Cardiac septum (tissue), 1 donor: ENCODE measurements at regions of chr1 and their contacts with region 1.

Region 1: GRCh38 chr1:207321079-207321789 is at the start of gene CD55:
- DNase-seq: peak; percentile 99
- total RNA-seq, gene CD55: 61.9 TPM

Region 2: DNA sequence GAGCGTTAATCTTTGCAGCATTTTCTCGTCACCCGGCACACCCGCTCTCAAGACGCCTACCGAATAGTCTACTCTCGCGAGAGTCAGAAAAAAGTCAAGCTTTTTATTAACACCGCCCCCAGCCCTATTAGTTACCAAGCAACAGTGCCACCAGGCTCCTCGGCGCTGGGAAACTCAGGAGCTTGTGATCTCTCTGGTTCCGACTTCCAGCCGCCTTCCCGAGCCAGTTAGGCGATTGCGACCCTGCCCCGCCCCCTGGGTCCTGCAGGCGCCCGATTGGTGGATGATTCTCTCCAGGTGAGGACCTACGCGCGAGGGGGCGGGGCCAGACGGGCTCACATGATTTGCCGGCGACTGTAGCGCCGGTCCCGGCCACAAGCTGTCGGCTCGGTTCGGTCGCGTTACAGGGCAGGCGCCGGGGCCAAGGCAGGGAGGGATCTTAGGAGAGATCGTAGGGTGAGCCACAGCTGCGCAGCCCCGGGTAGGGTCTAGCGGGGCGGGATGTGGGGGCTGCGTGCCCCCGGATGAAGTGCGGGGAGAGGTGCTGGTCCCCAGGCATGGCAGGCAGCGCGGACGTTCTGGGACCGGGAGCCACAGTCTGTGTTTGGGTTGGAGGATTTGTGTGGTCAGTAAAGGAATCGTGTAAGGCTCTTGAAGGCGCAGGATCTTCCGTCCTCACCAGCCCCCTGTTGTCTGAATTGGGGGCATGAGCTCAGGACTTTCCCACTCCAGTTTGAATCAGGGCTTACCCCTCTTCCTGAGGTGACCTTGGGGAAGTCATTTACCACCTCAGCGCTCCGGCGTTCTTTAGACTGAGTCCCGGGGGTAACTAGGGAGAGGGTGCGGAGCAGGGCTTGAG is 268.1 kb before region 1 on chr1 and contains the start of gene PFKFB2:
- intact Hi-C with region 1: loop called (anchors 5 kb)
- DNase-seq: peak; percentile 99
- total RNA-seq, gene PFKFB2: 49.9 TPM

Region 3: GRCh38 chr1:207205614-207206061 is 115.6 kb before region 1 on chr1:
- intact Hi-C with region 1: loop called (anchors 10 kb)
- DNase-seq: no peak

Region 4: GRCh38 chr1:207282058-207282457 is 39.2 kb before region 1 on chr1:
- intact Hi-C with region 1: loop called (anchors 5 kb)
- DNase-seq: no peak

Region 5: GRCh38 chr1:207389740-207390464 is 68.7 kb after region 1 on chr1:
- intact Hi-C with region 1: no loop called
- DNase-seq: no peak

Region 6: DNA sequence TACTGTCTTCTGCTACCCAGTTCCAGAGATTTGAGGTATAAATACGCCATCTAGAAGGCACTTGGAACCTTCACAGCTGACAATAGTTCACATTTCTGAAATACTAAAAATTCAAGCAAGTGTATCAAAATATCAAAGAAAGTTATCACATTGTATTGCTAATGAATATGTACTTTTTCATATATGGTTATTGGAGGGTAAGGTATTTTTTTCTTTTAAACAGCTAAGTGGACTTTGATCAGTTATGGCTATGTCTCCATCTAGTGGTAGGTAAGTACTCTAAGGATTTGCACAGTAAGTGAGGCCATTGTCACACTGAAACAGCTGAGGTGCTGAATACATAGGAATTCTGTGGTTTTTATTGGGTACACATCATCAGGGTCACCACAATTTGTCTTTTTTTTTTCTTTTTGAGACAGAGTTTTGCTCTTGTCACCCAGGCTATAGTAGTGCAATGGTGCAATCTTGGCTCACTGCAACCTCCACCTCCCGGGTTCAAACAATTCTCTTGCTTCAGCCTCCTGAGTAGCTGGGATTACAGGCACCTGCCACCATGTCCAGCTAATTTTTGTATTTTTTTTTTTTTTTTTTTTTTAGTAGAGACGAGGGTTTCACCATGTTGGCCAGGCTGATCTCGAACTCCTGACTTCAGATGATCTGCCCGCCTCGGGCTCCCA is 83.8 kb after region 1 on chr1:
- intact Hi-C with region 1: loop called (anchors 5 kb)
- DNase-seq: no peak